ENCODE measurements at regions of chr11 and their contacts with region 1.

Region 1: GRCh38 chr11:79400717-79401686 is 39.8 kb downstream of the TENM4 start:
- DNase-seq: peak; percentile 29
- CTCF ChIP-seq: peak; percentile 63

Region 2: DNA sequence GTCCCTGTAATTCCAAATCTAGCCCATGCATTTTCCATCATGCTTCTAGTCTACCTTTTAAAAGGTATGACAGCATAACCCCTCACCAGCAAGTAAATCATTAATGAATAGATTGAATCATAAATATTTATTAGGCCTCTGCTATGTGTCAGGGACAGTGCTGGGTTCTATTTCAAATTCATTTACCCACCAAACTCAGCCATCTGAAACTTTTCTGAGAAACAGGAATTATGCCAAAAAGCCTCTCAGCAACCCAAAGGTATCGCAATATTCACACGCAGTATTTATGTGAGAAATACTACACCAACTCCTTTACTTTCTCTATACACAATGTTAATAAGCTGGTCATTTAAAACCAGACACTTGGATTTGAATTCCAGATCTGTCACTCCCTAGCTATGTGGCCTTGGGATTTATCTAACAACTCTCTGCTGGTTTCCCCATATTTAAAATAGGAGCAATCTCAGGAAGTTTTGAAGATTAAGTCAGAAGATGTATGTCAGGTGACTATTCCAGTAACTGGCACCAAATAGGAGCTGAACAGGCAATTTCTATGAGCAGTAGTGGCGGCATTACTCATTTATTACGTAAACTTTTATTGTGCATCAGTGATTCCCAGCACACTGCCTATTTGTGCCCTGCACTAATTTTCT is 151.5 kb before region 1 on chr11:
- CTCF ChIA-PET with region 1: no interaction called
- POLR2A ChIA-PET with region 1: no interaction called
- DNase-seq: no peak
- CTCF ChIP-seq: no peak

Region 3: GRCh38 chr11:79431535-79431934 is 30.5 kb after region 1 on chr11:
- CTCF ChIA-PET with region 1: interaction called, 10 read pairs
- POLR2A ChIA-PET with region 1: no interaction called
- DNase-seq: no peak
- CTCF ChIP-seq: no peak

Region 4: DNA sequence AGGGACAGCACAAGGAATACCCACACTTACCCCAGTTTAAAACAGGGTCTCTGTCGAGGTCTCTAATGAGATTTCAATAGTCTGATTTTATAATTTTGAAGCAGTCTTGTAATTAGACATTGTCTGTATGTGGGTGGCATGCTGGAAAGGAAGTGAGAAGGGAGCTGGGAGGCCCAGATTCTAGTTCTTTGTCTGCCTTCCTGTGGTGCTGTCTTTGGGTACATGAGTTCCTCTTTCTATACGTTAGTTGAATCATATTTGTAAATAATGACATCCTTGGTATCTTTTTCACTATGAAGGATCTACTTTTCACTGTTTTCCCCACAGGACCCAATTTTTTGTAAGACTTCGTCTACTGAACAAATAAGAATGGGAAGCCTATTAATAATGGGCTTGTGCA is 81.8 kb after region 1 on chr11:
- CTCF ChIA-PET with region 1: interaction called, 16 read pairs
- POLR2A ChIA-PET with region 1: no interaction called
- DNase-seq: peak; percentile 69
- CTCF ChIP-seq: no peak

Region 5: DNA sequence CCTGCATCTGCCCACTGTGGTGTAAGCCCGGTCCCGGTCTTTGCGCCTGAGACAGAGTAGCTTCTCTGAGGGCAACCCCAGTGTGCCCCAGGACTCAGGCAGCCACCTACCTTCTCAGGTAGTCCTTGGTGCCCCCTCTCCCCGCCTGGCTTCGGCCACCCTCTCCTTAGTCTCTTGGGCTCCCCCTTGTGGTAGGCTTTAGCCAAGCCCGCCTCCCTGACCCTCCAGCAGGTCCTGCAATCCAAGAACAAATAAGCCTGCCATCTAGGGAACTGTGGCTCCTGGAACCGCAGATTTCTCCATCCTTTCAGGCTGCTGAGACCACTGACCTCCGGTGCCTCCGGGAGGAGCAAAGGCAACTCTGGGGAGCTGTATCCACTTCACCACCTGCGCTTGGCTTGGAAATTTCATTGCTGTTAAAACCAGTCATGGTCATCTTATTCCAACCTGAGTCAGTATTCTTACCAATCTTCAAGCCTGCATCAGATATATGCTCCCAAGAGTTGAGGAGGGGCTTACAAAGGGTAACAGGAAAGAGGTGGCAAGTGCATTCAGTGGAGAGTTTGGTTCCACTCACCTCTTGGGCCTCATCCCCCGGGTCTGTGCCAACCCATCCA is 92.7 kb after region 1 on chr11:
- CTCF ChIA-PET with region 1: interaction called, 73 read pairs
- POLR2A ChIA-PET with region 1: no interaction called
- DNase-seq: peak; percentile 80
- CTCF ChIP-seq: peak; percentile 92